ENCODE measurements at regions of chr6 and their contacts with region 1.

Region 1: GRCh38 chr6:112163295-112164257 is 76.2 kb downstream of the FAM229B start:
- DNase-seq: peak; percentile 46
- H3K4me3 ChIP-seq: no peak overlapping the region
- H3K27ac ChIP-seq: no peak overlapping the region
- H3K4me1 ChIP-seq: no peaks in the 10 kb centered on the region
- H3K27me3 ChIP-seq: no peaks in the 10 kb centered on the region
- CTCF ChIP-seq: peak; percentile 37 to 68 (median 60)
- POLR2A ChIP-seq: no peak

Region 2: DNA sequence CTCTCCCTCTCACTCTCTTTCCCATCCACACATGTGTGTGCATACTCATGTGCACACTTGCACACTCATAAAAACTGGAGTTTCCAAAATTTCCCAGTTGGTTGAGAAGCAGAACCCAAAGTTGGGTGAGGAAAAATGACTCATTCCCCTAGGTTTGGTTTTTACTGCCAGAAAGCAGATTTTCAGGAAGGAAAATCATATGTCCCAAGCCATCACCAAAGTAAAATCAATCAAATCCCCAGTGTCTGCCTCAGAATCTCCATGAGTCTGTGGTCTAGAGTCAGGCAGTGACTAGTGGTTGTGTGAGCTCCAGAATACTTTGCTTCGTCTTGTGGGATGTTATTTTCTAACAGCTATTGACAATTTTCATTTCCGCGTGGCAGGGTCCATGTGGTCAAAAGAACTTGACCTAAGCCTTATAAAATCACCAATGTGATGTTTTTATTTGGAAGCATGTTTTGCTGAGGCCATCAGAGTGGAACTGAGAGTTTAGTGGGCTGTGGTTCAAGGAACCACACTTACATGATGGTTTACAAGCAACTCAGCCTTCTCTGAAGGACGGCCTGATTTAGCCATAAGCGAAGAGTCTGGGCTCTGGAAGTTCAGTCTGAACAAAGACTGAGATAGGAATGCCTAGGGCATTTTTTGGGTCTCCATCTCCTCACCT is 191.6 kb before region 1 on chr6:
- intact Hi-C with region 1: no loop called
- DNase-seq: no peak
- H3K4me3 ChIP-seq: no peak overlapping the region
- H3K27ac ChIP-seq: no peak overlapping the region
- H3K4me1 ChIP-seq: no peaks in the 10 kb centered on the region
- H3K27me3 ChIP-seq: no peaks in the 10 kb centered on the region
- CTCF ChIP-seq: no peak
- POLR2A ChIP-seq: no peak

Region 3: DNA sequence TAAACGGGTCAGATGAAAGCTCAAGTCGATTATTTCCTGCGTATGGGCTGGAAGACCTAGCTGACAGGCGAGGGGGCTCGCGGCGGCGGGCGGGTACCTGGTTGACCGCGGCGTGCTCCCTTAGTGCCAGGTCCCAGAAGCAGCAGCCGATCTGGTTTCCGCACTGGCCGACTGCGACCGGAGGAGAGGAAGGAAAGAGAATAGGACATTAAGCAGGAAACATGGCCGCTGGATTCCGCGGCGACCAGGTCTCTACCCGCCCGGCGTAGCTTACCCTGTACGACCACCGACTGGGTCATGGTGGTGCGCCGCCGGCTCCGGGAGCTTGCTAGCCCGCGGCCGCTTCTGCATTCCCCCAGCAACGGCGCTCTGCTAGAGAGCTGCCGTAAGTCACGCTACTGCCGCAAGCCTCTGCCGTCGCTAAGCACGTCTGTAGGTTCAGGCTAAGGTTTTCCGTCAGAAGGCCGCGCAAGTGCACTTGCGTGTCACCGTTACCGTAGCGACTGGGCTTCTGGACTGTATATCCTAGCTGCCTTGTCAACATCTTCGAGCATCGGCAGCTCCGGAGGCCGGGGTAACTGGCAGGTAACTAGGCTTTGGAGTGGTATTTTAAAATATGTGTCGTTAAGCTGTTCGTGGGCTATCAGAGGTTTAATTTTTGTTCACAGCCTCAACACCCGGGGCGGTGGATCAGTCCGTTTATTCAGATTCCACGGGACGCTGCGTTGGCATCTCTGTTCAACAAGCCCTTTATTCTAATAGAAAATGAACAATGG is 76.3 kb before region 1 on chr6 and contains the starts of genes FAM229B and TUBE1:
- intact Hi-C with region 1: loop called (anchors 5 kb)
- DNase-seq: peak; percentile 91
- H3K4me3 ChIP-seq: peak within 1 kb of the TSS; percentile 67 to 76
- H3K27ac ChIP-seq: peak within 1 kb of the TSS; percentile 80 to 81
- H3K4me1 ChIP-seq: no peaks in the 10 kb centered on the region
- H3K27me3 ChIP-seq: no peaks in the 10 kb centered on the region
- CTCF ChIP-seq: no peak
- POLR2A ChIP-seq: peak; percentile 73
- total RNA-seq, gene FAM229B: 13.7 to 32.2 TPM
- total RNA-seq, gene TUBE1: 20.5 to 36.8 TPM

Region 4: DNA sequence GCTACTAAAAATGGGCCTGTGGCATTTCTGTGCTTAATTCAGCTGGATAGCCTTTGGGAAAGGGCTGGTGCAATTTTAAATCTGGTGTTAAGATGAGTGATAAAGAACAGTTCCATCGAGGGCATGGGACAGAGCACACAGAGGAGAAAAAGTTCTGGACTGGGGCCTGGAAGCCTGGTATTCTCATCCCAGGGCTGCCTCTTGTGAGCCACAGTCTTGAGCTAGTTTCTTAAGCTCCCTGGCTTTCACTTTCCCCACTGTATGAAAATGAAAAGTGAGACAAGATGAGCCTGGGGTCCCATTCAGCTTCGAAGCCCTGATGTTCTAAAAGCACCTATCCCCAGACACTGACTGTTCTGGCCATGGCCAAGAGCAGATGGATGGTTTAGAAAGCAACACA is 105.1 kb after region 1 on chr6:
- intact Hi-C with region 1: no loop called
- DNase-seq: no peak
- H3K4me3 ChIP-seq: no peak overlapping the region
- H3K27ac ChIP-seq: no peak overlapping the region
- H3K4me1 ChIP-seq: no peaks in the 10 kb centered on the region
- H3K27me3 ChIP-seq: no peaks in the 10 kb centered on the region
- CTCF ChIP-seq: no peak
- POLR2A ChIP-seq: no peak

Measured in prostate gland (tissue), 2 donors.